GM18951 (cell line): ENCODE measurements at regions of chr11 and their contacts with region 1.

Region 1: DNA sequence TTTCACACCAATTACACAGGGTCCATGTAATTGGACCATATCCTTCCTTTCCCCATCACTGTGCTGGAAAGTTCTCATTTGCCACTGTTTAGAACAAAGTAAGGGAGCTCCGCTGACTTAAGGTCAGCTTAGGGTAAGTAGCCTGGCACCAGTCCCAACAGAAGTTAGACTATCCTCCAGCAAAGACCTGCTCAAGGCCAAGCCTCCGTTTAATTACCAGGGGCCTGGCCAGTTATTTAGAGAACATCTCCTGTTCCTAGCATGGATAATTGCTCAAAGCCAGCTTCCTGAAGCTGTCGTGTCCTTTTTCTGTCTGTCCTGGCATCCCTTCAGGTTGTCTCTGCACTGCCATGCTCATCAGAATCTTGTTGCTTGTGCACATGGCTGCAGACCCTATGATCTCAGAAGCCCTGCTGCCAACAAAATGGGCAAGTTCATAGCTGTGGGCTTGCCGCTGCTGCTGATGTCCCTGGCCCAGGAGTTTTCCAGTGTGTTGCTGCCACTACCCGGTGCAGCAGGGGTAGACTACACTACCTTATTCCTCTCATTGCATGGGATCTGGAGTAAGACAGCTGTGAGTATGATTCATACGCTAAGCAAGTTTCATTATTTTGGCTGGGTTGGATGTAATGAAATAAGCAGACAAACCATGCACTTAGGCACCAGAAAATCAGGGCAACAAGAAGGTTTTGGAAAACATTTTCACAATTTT is 8.1 kb downstream of the OR8A1 start:
- POLR2A ChIP-seq: no peak

Region 2: GRCh38 chr11:122717264-122717867 is 1860.5 kb before region 1 on chr11:
- in situ Hi-C with region 1: no loop called
- POLR2A ChIP-seq: no peak

Region 3: DNA sequence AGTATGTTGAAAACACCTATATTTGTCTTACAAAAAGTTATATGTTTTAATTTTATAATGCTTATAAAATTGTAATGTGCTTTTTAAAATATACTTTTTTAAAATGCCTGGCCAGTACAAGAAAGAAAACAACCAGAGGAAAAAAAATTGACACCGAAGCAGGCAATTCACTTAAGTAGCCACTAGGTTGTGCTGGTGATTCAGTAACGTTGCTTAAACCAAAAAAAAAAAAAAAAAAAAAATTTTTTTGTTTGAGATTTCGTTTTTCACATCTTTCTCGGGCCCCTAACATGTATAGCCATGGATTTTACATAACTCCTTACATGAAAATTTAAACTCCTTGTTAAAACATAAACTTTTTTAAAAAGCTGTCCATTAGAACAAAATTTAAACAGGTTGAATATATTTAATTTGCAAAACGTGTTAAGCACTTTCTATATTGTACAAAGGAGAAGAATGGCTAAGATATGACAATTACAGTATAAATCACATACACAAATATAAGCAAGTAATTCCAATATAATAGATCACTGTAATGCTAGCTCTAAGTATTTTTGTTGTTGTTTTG is 162.4 kb before region 1 on chr11:
- in situ Hi-C with region 1: loop called (anchors 10 kb)
- POLR2A ChIP-seq: no peak